ENCODE measurements at regions of chr10 and their contacts with region 1.

Region 1: DNA sequence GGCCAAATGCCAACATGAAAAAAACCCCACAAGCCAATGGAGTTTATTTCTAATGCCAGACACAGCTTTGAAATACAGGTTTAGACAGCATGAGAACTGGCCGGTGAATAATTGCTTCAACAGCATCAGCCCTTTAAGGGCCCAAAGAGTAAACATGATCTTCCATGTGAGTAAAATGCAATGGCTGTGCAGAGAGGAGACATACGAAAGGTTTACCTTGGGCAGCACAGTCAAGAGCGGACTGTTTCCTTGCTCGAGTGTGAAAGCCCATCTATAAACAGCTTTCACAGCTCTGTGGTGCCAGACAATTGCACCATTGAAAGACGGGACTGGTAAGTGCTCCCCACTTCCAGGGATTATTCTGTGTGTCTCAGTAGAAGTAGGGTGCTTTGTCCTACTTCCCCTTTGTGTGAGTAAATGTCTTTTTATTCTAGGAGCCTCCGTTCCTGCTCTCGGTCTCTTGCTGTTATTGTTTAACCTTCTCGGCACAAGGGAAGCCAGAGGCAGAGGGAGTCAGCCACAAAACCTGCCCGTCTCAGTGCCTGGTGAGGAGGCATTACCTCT is 77.8 kb upstream of the KAT6B start:
- DNase-seq: no peak
- ATAC-seq: no peak

Region 2: GRCh38 chr10:73174148-73174925 is 1574.2 kb before region 1 on chr10:
- intact Hi-C with region 1: loop called (anchors 5 kb)
- DNase-seq: no peak
- ATAC-seq: no peak

Region 3: DNA sequence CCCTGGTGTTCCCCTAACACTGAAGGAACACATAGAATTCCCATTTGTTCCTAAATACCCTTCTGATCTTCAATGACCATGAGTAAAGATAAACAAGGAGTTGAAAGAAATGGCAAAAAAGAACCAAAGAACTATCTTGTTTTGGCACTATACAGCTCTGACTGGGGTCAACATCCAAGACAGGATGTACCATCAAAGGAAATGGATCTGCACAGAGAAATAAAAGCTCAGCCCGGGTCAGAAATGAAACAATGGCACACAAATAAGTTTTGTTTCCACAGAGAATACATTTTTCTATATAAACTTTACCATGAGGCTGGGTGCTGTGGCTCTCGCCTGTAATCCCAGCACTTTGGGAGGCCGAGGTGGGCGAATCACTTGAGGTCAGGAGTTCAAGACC is 1139.4 kb before region 1 on chr10:
- intact Hi-C with region 1: no loop called
- DNase-seq: no peak
- ATAC-seq: no peak